ENCODE measurements at regions of chr9 and their contacts with region 1.

Region 1: DNA sequence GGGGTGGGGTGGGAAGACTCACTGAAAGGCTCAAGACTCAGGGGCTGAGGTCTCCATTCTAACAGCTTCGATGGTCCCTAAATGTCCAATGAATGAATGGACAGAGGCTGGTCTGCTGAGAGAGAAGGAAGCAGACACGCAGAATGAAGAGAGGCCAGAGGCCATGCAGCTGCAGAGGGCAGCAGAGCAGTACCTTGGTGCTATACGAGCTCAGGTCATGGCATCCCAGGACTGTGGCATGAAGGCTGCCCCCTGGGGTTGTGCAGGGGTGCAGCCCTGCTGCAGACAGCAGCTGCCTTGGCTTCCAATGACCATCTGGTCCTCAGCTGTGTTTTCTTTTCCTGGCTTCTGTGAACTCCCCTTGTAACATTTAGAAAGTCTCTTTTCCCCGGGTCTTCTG is 15.2 kb upstream of the CORO2A start:
- DNase-seq: no peak
- ATAC-seq: no peak
- H3K4me3 ChIP-seq: no peak overlapping the region
- H3K4me3 Mint-ChIP-seq: no peak overlapping the region
- H3K27ac ChIP-seq: no peak overlapping the region
- H3K27ac Mint-ChIP-seq: no peak overlapping the region
- H3K4me1 ChIP-seq: no peaks in the 10 kb centered on the region
- H3K4me1 Mint-ChIP-seq: peaks cover 5% of the 10 kb centered on the region
- H3K27me3 ChIP-seq: no peaks in the 10 kb centered on the region
- H3K27me3 Mint-ChIP-seq: no peaks in the 10 kb centered on the region
- CTCF ChIP-seq: no peak

Region 2: DNA sequence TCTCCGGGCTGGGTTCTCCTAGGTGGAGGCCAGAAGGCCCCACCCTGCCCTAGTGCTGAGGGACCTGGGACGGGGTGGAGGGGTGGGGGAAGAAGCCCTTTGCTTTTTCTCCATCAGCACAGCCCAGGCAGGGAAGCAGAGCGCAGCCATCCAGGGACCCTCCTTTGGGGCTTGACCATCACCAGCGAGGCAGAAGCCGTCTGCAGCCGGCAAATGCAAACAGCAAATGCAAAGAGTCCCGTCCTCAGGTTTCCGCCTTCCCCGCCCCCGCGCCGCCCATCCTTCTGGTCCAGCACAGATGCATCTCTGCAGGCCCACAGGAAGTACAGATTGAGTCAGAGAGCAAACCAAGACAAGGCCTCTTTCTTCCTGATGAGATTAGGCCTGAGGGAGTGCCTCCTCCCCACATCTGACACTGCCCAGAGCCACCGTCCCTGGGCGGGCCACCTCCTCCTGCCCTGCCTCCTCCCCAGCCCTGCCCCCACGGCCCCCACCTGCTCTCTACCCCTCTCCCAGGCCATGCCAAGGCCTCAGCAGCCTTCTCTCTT is 38.6 kb before region 1 on chr9:
- CTCF ChIA-PET with region 1: no interaction called
- POLR2A ChIA-PET with region 1: no interaction called
- intact Hi-C with region 1: no loop called
- DNase-seq: peak in 7 of 9 experiments; percentile 16 to 66 (median 43)
- ATAC-seq: peak; percentile 66
- H3K4me3 ChIP-seq: no peak overlapping the region
- H3K4me3 Mint-ChIP-seq: no peak overlapping the region
- H3K27ac ChIP-seq: peak overlapping the region; percentile 41 to 71
- H3K27ac Mint-ChIP-seq: peak overlapping the region; percentile 87
- H3K4me1 ChIP-seq: peaks cover 27% of the 10 kb centered on the region
- H3K4me1 Mint-ChIP-seq: peaks cover 68% of the 10 kb centered on the region
- H3K27me3 ChIP-seq: no peaks in the 10 kb centered on the region
- H3K27me3 Mint-ChIP-seq: no peaks in the 10 kb centered on the region
- CTCF ChIP-seq: no peak

Region 3: DNA sequence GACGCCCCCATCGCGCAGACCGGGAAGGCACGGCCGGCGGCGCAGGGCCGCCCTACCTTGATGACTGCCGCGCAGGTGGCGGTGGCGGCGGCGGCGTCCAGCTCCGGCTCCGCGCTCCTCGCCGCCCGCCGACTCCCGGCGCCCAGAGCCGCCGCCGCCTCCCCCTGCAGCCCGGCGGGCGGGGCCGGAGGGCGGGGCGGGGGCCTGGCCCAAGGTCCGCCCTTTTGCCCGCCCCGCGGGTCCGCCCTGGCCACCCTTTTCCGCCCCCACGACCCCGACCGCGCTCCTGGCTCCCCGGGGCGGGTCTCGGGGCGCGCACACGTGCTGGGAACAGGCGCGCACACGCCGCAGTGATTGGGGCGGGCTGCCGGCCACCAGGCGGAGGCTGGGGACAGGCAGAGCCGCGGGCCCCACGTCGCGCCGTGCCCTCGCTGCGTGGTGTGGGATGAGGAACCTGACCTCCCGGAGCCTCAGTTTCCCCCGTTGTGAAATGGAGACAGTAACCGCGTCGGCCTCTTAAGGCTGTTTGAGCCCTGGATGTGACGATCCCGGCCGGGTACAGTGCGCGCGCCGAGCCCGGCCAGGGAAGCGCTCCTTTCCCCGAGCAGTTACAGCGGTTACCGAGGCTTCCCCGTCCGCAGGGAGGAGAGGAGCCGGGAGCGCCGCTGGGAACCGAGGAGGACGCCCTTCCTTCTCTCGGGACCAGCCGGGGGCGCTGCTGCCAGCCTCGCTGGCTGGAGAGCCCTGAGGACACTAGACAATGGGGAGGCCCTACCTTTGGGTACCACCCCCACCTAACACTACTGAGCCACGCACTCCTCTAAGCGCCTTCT is 14.9 kb before region 1 on chr9 and contains the start of gene CORO2A:
- CTCF ChIA-PET with region 1: interaction called, 20 read pairs
- POLR2A ChIA-PET with region 1: interaction called, 3 read pairs
- intact Hi-C with region 1: loop called in 1 of 2 experiments (anchors 1 kb)
- DNase-seq: peak; percentile 16 to 85 (median 69)
- ATAC-seq: peak; percentile 72
- H3K4me3 ChIP-seq: peak within 1 kb of the TSS; percentile 80 to 84
- H3K4me3 Mint-ChIP-seq: peak within 1 kb of the TSS; percentile 85
- H3K27ac ChIP-seq: peak within 1 kb of the TSS; percentile 39 to 42
- H3K27ac Mint-ChIP-seq: peak within 1 kb of the TSS; percentile 69
- H3K4me1 ChIP-seq: peaks cover 32% of the 10 kb centered on the region
- H3K4me1 Mint-ChIP-seq: peaks cover 40% of the 10 kb centered on the region
- H3K27me3 ChIP-seq: no peaks in the 10 kb centered on the region
- H3K27me3 Mint-ChIP-seq: no peaks in the 10 kb centered on the region
- CTCF ChIP-seq: no peak
- total RNA-seq, gene CORO2A: 6.4 to 6.7 TPM

Region 4: DNA sequence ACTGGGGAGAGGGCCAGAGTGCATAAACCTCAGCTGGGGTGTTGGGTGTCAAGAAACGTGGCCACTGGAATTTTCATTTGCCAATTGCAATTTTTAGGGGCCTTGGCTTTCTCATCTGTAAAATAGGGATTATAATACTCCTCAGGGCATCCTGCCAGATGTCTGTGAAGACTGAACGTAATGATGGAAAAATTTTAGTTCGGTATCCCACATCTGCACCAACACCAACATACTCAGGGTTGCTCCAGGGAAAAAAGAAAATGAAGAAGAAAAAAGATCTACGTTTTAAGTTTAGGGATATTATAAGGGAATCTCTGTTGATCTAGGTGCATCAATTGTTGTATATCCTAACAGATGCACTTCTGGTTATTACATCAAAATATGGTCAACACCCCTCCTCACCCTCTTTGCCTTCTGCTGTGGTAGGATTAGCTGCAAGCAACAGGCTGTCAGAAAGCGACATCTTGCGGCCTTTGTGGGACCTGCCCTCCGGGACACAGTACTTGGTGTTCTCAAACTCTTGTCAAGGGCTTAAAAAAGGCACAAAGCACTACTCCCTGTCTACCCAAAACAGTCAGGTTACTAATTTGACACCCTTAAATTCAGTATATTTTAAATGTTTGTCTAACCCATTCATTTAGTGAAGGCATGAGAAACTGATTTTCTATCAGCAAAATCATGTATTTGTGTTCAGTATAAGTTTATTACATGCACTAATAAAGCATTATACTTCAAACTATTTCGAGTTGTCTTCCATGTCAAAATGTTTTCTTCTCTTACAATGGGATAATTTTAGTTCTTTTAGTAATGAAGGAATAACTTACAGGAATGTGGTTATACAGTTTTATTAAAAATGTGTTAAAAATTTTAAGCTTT is 56.1 kb after region 1 on chr9:
- CTCF ChIA-PET with region 1: interaction called, 22 read pairs
- POLR2A ChIA-PET with region 1: interaction called, 3 read pairs
- intact Hi-C with region 1: loop called (anchors 1 kb)
- DNase-seq: peak; percentile 70 to 87 (median 84)
- ATAC-seq: peak; percentile 100
- H3K4me3 ChIP-seq: no peak overlapping the region
- H3K4me3 Mint-ChIP-seq: no peak overlapping the region
- H3K27ac ChIP-seq: no peak overlapping the region
- H3K27ac Mint-ChIP-seq: no peak overlapping the region
- H3K4me1 ChIP-seq: no peaks in the 10 kb centered on the region
- H3K4me1 Mint-ChIP-seq: peaks cover 2% of the 10 kb centered on the region
- H3K27me3 ChIP-seq: no peaks in the 10 kb centered on the region
- H3K27me3 Mint-ChIP-seq: no peaks in the 10 kb centered on the region
- CTCF ChIP-seq: peak; percentile 92

Measured in CD8-positive, alpha-beta T cell (primary cell).